ENCODE measurements at regions of chr20 and their contacts with region 1.

Region 1: GRCh38 chr20:47533518-47534062 is 31.9 kb downstream of the NCOA3 start:
- DNase-seq: no peak
- H3K4me3 ChIP-seq: no peak overlapping the region
- H3K4me3 Mint-ChIP-seq: no peak overlapping the region
- H3K27ac Mint-ChIP-seq: no peak overlapping the region
- H3K4me1 ChIP-seq: no peaks in the 10 kb centered on the region
- H3K4me1 Mint-ChIP-seq: peaks cover 10% of the 10 kb centered on the region
- H3K27me3 ChIP-seq: no peaks in the 10 kb centered on the region
- H3K27me3 Mint-ChIP-seq: no peaks in the 10 kb centered on the region
- CTCF ChIP-seq: no peak

Region 2: DNA sequence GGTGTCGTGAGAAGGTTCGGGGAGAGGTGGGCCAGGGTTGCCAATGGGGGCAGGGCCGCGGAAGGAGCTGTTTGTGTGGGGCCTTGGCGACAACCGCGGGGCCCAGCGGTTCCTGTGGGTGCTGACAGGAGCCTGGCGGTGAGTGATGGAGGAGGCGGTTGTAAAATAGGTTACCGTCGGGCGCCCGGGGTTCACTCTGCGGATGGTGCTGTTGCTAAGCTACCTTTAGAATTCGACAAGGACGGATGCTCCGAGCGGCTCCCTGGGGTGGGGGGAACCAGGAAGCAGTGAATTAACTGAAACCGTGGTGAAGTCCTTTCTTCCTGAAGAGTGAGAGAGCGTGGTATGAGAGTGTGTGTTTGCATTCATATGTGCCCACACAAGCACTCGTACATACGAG is 1287.0 kb before region 1 on chr20:
- CTCF ChIA-PET with region 1: no interaction called
- POLR2A ChIA-PET with region 1: interaction called, 13 read pairs
- intact Hi-C with region 1: no loop called
- DNase-seq: no peak
- H3K4me3 ChIP-seq: no peak overlapping the region
- H3K4me3 Mint-ChIP-seq: no peak overlapping the region
- H3K27ac Mint-ChIP-seq: no peak overlapping the region
- H3K4me1 ChIP-seq: no peaks in the 10 kb centered on the region
- H3K4me1 Mint-ChIP-seq: no peaks in the 10 kb centered on the region
- H3K27me3 ChIP-seq: no peaks in the 10 kb centered on the region; the same call in 1 of the 2 replicates
- H3K27me3 Mint-ChIP-seq: peaks cover 35% of the 10 kb centered on the region
- CTCF ChIP-seq: no peak

Region 3: GRCh38 chr20:47857566-47858471 is 324.2 kb after region 1 on chr20:
- CTCF ChIA-PET with region 1: no interaction called
- POLR2A ChIA-PET with region 1: no interaction called
- intact Hi-C with region 1: no loop called
- DNase-seq: no peak
- H3K4me3 ChIP-seq: no peak overlapping the region
- H3K4me3 Mint-ChIP-seq: no peak overlapping the region
- H3K27ac Mint-ChIP-seq: peak overlapping the region; percentile 19
- H3K4me1 ChIP-seq: peaks cover 13% of the 10 kb centered on the region
- H3K4me1 Mint-ChIP-seq: peaks cover 13% of the 10 kb centered on the region
- H3K27me3 ChIP-seq: no peaks in the 10 kb centered on the region
- H3K27me3 Mint-ChIP-seq: no peaks in the 10 kb centered on the region
- CTCF ChIP-seq: no peak